Transverse colon (tissue), 4 donors: ENCODE measurements at regions of chr2 and their contacts with region 1.

Region 1: GRCh38 chr2:63888490-63889402 is 47.0 kb downstream of the UGP2 start:
- DNase-seq: peak; percentile 32
- H3K4me3 ChIP-seq: no peak overlapping the region
- H3K27ac ChIP-seq: no peak overlapping the region
- H3K4me1 ChIP-seq: no peaks in the 10 kb centered on the region
- H3K27me3 ChIP-seq: no peaks in the 10 kb centered on the region
- CTCF ChIP-seq: peak; percentile 59 to 68 (median 64)
- EP300 ChIP-seq: no peak
- POLR2A ChIP-seq: no peak

Region 2: GRCh38 chr2:63680455-63680854 is 208.3 kb before region 1 on chr2:
- in situ Hi-C with region 1: loop called in 1 of 4 experiments (anchors 10 kb)
- intact Hi-C with region 1: no loop called
- DNase-seq: no peak
- H3K4me3 ChIP-seq: no peak overlapping the region
- H3K27ac ChIP-seq: no peak overlapping the region
- H3K4me1 ChIP-seq: no peaks in the 10 kb centered on the region
- H3K27me3 ChIP-seq: no peaks in the 10 kb centered on the region
- CTCF ChIP-seq: no peak
- EP300 ChIP-seq: no peak
- POLR2A ChIP-seq: no peak